Activated CD4-positive, alpha-beta T cell treated with anti-CD3 and anti-CD28 coated beads, Interleukin-2, amount 10 ng/mL, durations not matched to agents 24 days and 14 days (primary cell): ENCODE measurements at regions of chr2 and their contacts with region 1.

Region 1: GRCh38 chr2:53970724-53971602 is at the start of gene PSME4:
- DNase-seq: peak; percentile 98
- H3K4me3 Mint-ChIP-seq: peak within 1 kb of the TSS; percentile 93
- H3K27ac Mint-ChIP-seq: peak within 1 kb of the TSS; percentile 97
- H3K4me1 Mint-ChIP-seq: peaks cover 28% of the 10 kb centered on the region
- H3K27me3 Mint-ChIP-seq: no peaks in the 10 kb centered on the region
- total RNA-seq, gene PSME4: 49.6 and 52.1 TPM in 2 replicates

Region 2: DNA sequence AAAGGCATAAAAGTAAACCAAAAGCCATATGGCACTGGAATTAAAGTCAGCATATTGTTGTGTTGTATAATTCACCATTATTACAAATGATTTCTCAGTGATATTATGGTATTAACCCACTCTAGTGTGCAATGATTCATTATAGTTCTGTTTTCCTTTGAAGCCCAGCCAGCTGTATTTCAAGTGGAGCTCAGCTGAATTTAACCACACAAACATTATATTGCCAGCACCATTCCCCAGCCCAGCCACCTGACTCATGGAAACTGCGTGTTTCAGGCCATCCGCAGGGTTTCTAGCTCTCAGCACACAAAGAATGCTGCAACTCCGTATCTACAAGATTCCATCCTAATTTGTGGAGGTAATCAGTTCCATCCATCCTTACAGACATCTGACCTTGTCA is 370.1 kb before region 1 on chr2:
- intact Hi-C with region 1: no loop called
- DNase-seq: peak; percentile 27
- H3K4me3 Mint-ChIP-seq: no peak overlapping the region
- H3K27ac Mint-ChIP-seq: no peak overlapping the region
- H3K4me1 Mint-ChIP-seq: no peaks in the 10 kb centered on the region
- H3K27me3 Mint-ChIP-seq: no peaks in the 10 kb centered on the region

Region 3: DNA sequence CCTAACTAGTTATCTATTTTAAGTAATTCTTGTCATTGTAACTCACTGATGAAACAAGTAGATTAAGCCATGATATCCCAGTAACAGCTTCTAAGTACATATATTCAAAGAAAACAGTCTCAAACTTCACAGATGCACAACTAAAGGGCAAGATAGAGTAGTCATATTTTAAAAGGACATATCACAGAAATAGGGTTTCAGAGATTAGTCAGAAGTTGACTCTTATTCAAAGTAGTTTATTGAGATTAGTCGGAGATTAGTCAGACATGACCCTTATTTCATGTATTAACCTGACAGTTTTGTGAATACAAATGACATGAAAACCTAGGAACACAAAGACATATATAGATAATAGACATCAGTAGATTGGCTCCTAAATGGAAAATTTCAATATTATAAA is 219.2 kb before region 1 on chr2:
- intact Hi-C with region 1: loop called (anchors 5 kb)
- DNase-seq: no peak
- H3K4me3 Mint-ChIP-seq: no peak overlapping the region
- H3K27ac Mint-ChIP-seq: peak overlapping the region; percentile 54
- H3K4me1 Mint-ChIP-seq: peaks cover 17% of the 10 kb centered on the region
- H3K27me3 Mint-ChIP-seq: no peaks in the 10 kb centered on the region

Region 4: DNA sequence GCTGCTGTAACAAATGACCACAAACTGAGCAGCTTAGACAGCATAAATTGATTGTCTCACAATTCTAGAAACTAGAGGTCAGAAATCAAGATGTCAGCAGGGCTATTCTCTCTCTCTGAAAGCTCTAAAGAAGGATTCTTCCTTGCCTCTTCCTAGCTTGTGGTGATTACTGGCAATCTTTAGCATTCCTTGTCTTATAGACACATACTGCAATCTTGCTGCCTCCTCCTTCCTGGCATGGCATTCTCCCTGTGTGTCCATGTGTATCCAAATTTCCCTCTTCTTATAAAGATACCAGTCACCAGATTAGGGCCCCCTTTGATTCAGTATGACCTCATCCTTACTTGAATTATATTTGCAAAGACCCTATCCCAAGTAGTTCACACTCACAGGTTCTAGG is 186.5 kb before region 1 on chr2:
- intact Hi-C with region 1: no loop called
- DNase-seq: no peak
- H3K4me3 Mint-ChIP-seq: peak overlapping the region; percentile 42
- H3K27ac Mint-ChIP-seq: peak overlapping the region; percentile 6
- H3K4me1 Mint-ChIP-seq: peaks cover 29% of the 10 kb centered on the region
- H3K27me3 Mint-ChIP-seq: no peaks in the 10 kb centered on the region

Region 5: GRCh38 chr2:53886406-53887280 is 84.3 kb before region 1 on chr2:
- intact Hi-C with region 1: loop called (anchors 5 kb)
- DNase-seq: no peak
- H3K4me3 Mint-ChIP-seq: no peak overlapping the region
- H3K27ac Mint-ChIP-seq: peak overlapping the region; percentile 12
- H3K4me1 Mint-ChIP-seq: peaks cover 17% of the 10 kb centered on the region
- H3K27me3 Mint-ChIP-seq: no peaks in the 10 kb centered on the region

Region 6: DNA sequence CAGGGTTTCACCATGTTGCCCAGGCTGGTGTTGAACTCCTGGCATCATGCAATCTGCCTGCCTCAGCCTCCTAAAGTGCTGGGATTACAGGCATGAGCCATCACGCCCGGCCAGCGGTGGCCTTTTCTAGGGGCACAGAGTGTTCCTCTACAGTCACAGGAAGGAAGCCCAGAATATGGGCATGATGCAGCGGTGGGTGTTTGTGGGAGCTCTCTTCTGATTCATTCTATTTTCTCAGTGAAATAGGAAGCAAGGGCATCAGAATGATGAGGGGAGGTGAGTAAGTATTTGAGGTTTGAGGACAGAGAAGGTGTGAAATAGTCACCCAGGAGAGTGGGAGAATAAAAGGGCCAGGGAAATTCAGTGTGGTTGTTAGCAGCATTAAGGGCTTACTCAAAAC is 70.2 kb after region 1 on chr2:
- intact Hi-C with region 1: loop called (anchors 2 kb)
- DNase-seq: peak; percentile 61
- H3K4me3 Mint-ChIP-seq: no peak overlapping the region
- H3K27ac Mint-ChIP-seq: no peak overlapping the region
- H3K4me1 Mint-ChIP-seq: peaks cover 8% of the 10 kb centered on the region
- H3K27me3 Mint-ChIP-seq: no peaks in the 10 kb centered on the region

Region 7: DNA sequence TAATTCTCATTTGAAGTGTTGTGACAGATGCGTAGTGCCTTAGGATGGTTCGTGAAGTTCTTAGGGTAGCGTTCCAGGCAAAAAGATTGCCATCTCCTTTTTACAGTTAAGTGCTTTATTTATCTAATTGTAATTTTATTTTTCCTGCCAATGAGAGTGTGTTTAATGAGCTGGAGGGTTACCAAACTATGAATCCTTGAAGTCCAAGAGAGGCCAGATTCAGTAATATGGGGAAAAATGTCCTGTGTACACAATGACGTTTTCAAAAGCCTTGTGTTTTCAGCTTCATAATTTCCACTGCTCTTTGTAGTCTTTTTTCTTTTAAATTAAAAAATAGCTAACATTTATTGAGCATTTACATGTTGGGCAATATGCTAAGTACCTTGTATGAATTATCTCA is 168.2 kb after region 1 on chr2:
- intact Hi-C with region 1: no loop called
- DNase-seq: no peak
- H3K4me3 Mint-ChIP-seq: no peak overlapping the region
- H3K27ac Mint-ChIP-seq: no peak overlapping the region
- H3K4me1 Mint-ChIP-seq: no peaks in the 10 kb centered on the region
- H3K27me3 Mint-ChIP-seq: no peaks in the 10 kb centered on the region

Region 8: DNA sequence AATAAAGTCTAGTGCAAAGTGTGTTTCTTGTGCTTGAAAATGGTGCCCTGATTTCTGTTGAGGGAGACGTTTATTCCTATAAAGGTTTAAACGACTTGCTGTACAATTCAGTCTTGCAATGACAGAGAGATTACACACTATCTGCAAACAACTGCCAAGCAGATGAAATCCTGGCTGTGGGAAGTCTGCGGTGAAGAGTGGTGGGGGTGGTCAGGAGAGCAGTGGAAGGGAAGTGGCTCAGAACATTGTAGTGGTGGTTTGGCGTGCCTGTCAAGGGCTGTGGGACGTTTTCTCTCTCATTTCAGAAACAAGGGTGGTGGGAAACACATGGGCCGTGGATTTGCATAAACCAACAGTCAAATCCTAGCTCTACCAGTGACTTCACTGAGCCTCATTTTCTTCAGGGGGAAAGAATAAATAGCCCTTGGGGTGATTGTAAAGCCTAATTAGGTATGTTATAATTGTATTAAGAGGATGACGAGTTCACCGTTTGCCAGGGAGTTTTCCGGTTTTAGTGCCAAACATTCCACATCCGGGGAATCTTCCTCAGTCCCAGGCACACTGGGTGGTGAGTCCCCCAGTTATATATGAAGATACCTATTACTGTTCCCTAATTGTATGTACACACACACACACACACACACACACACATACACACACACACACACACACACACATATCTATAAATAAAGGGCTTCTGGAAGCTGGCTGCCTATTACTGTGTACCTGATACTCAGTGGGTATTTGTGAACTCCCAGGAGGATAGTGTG is 600.1 kb after region 1 on chr2:
- intact Hi-C with region 1: loop called (anchors 5 kb)
- DNase-seq: peak; percentile 95
- H3K4me3 Mint-ChIP-seq: peak overlapping the region; percentile 79
- H3K27ac Mint-ChIP-seq: peak overlapping the region; percentile 96
- H3K4me1 Mint-ChIP-seq: peaks cover 78% of the 10 kb centered on the region
- H3K27me3 Mint-ChIP-seq: no peaks in the 10 kb centered on the region